ENCODE measurements at regions of chr12 and their contacts with region 1.

Region 1: GRCh38 chr12:117836999-117837736 is 131.6 kb downstream of the KSR2 start:
- DNase-seq: peak; percentile 60
- H3K4me3 Mint-ChIP-seq: no peak overlapping the region
- H3K27ac Mint-ChIP-seq: no peak overlapping the region
- H3K4me1 Mint-ChIP-seq: peaks cover 3% of the 10 kb centered on the region
- H3K27me3 Mint-ChIP-seq: no peaks in the 10 kb centered on the region

Region 2: GRCh38 chr12:117212563-117213190 is 624.5 kb before region 1 on chr12:
- intact Hi-C with region 1: loop called (anchors 5 kb)
- DNase-seq: peak; percentile 30
- H3K4me3 Mint-ChIP-seq: no peak overlapping the region
- H3K27ac Mint-ChIP-seq: no peak overlapping the region
- H3K4me1 Mint-ChIP-seq: no peaks in the 10 kb centered on the region
- H3K27me3 Mint-ChIP-seq: peaks cover 4% of the 10 kb centered on the region

Region 3: GRCh38 chr12:117367011-117367638 is 470.0 kb before region 1 on chr12:
- intact Hi-C with region 1: loop called (anchors 1 kb)
- DNase-seq: peak; percentile 33
- H3K4me3 Mint-ChIP-seq: no peak overlapping the region
- H3K27ac Mint-ChIP-seq: no peak overlapping the region
- H3K4me1 Mint-ChIP-seq: no peaks in the 10 kb centered on the region
- H3K27me3 Mint-ChIP-seq: peaks cover 17% of the 10 kb centered on the region

Region 4: DNA sequence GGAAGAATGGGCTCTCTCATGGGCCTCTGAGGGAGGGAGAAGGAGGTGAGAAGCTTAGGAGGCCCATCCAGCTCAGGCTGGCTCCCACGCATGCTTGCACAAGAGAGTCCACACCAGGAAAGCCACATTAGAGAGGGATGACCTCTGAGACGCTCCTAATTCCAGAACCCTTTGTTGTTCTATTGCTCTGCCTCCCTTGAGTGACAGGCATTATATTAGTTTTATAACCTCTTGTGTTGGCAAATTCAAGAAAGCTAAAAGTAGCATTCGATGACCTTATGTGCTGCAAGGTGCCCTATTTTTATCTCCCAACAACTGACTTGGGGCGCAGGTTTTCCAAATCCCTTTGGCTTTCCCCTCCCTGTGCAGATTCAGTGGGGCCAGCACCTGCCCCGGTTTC is 58.5 kb before region 1 on chr12:
- intact Hi-C with region 1: no loop called
- DNase-seq: no peak
- H3K4me3 Mint-ChIP-seq: no peak overlapping the region
- H3K27ac Mint-ChIP-seq: no peak overlapping the region
- H3K4me1 Mint-ChIP-seq: no peaks in the 10 kb centered on the region
- H3K27me3 Mint-ChIP-seq: no peaks in the 10 kb centered on the region

Measured in activated T-helper 2 cell treated with anti-CD3 and anti-CD28 coated beads, Interferon-gamma antibody, Interleukin-2, Interleukin-4, amounts not matched to agents 10 μg/mL and 5 μg/mL and 100 μg/mL, durations not matched to agents 14 hours and 24 hours and 36 hours (primary cell).